Heart right ventricle (tissue), 16 donors: ENCODE measurements at regions of chr7 and their contacts with region 1.

Region 1: GRCh38 chr7:142833174-142834048 is 21.5 kb upstream of the EPHB6 start:
- DNase-seq: no peak
- ATAC-seq: no peak
- H3K4me3 ChIP-seq: no peak overlapping the region
- H3K27ac ChIP-seq: no peak overlapping the region
- H3K4me1 ChIP-seq: no peaks in the 10 kb centered on the region
- H3K27me3 ChIP-seq: peaks cover 0 to 18% (median 5%) of the 10 kb centered on the region in 7 donors
- CTCF ChIP-seq: no peak

Region 2: DNA sequence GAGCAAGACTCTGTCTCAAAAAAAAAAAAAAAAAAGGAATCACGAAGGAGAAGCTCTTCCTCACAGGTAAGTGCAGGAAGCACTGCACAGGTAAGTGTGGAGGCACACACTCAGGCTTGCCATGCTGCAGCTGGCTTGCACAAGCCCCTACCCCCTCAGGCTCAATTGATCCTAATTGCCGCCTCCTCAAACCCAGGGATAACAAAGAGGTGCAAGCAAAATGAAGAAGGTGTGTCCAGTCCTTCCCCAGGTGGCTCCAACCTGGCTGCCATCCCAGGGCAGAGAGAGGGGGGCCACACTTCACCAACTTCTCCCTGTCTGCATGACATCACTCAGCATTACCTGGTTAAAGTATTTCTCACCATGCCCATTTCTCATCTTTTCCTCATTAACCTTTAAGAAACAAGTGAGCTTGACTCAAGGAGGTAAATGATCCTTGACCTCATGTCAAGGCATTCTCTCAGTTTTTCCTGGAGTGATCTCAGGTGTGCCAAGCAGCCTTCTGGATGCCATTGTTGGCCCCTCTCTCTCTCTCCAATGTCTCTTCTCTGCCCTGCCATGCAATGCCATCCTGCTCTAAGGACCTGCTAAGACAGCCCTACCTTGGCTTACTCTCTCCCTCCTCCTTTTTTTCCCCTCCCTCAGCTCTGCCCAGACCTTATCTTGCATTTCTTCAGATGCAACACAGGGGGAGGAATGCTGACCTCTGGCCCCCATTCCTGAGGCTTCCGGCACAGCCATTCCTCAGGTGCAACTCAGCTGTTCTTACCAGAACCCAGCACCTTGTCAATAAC is 65.2 kb after region 1 on chr7:
- intact Hi-C with region 1: loop called in 1 of 10 experiments (anchors 10 kb)
- DNase-seq: no peak
- ATAC-seq: no peak
- H3K4me3 ChIP-seq: no peak overlapping the region
- H3K27ac ChIP-seq: no peak overlapping the region
- H3K4me1 ChIP-seq: no peaks in the 10 kb centered on the region
- H3K27me3 ChIP-seq: peaks cover 0 to 47% (median 0%) of the 10 kb centered on the region in 7 donors
- CTCF ChIP-seq: no peak